ENCODE measurements at regions of chr3 and their contacts with region 1.

Region 1: DNA sequence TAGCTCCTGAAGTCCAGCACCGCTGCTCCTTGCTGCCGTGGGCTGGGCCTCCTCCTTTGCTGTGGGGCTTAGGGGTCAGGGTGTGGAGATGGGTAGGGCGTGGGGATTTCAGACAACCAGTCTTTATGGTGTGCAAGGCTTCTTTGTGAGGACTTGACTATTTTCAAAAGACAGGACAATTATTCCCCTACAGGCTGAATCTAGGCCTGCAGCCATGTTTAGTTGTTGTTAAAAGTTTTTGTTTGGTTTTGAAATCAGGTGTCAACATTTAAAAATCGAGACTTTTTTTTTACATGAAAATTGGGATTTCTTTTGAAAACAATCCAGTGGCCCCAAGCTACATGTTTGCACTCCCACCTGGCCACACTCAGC is 10.6 kb downstream of the RPL32 start:
- DNase-seq: peak in 1 of 4 experiments; percentile 41
- ATAC-seq: peak; percentile 11
- H3K4me3 ChIP-seq: no peak overlapping the region
- H3K27ac ChIP-seq: no peak overlapping the region; the same call in 2 of the 3 replicates
- H3K4me1 ChIP-seq: no peaks in the 10 kb centered on the region; a peak in 1 of 5 replicates
- H3K27me3 ChIP-seq: no peaks in the 10 kb centered on the region
- CTCF ChIP-seq: peak in 2 of 3 experiments; percentile 34 to 39; a peak in 2 of 6 replicates
- EP300 ChIP-seq: no peak
- POLR2A ChIP-seq: no peak
- RAD21 ChIP-seq: no peak

Region 2: GRCh38 chr3:12706504-12707253 is 124.1 kb before region 1 on chr3:
- CTCF ChIA-PET with region 1: interaction called, 3 read pairs
- POLR2A ChIA-PET with region 1: no interaction called
- in situ Hi-C with region 1: no loop called
- intact Hi-C with region 1: loop called (anchors 2 kb)
- DNase-seq: peak; percentile 73 to 87 (median 80)
- ATAC-seq: peak; percentile 99
- H3K4me3 ChIP-seq: no peak overlapping the region
- H3K27ac ChIP-seq: no peak overlapping the region
- H3K4me1 ChIP-seq: no peaks in the 10 kb centered on the region
- H3K27me3 ChIP-seq: peaks cover 14 to 33% of the 10 kb centered on the region in 2 experiments
- CTCF ChIP-seq: peak; percentile 95 to 99 (median 99)
- EP300 ChIP-seq: no peak
- POLR2A ChIP-seq: no peak
- RAD21 ChIP-seq: peak; percentile 73 to 95

Region 3: GRCh38 chr3:12810013-12810780 is 20.6 kb before region 1 on chr3:
- CTCF ChIA-PET with region 1: no interaction called
- POLR2A ChIA-PET with region 1: interaction called, 108 read pairs
- in situ Hi-C with region 1: no loop called
- intact Hi-C with region 1: no loop called
- DNase-seq: peak; percentile 98 to 100 (median 100)
- ATAC-seq: peak; percentile 99
- H3K4me3 ChIP-seq: peak overlapping the region; percentile 59
- H3K27ac ChIP-seq: peak overlapping the region; percentile 13; the same call in 2 of the 3 replicates
- H3K4me1 ChIP-seq: peaks cover 9 to 20% of the 10 kb centered on the region in 2 experiments; a peak in 4 of 5 replicates
- H3K27me3 ChIP-seq: no peaks in the 10 kb centered on the region
- CTCF ChIP-seq: peak; percentile 78 to 93 (median 93)
- EP300 ChIP-seq: no peak
- POLR2A ChIP-seq: peak; percentile 64; the same call in 1 of the 2 replicates
- RAD21 ChIP-seq: peak; percentile 61 to 70

Region 4: GRCh38 chr3:12817343-12817710 is 13.4 kb before region 1 on chr3:
- CTCF ChIA-PET with region 1: no interaction called
- POLR2A ChIA-PET with region 1: interaction called, 108 read pairs
- in situ Hi-C with region 1: no loop called
- intact Hi-C with region 1: no loop called
- DNase-seq: no peak
- ATAC-seq: no peak
- H3K4me3 ChIP-seq: no peak overlapping the region
- H3K27ac ChIP-seq: no peak overlapping the region
- H3K4me1 ChIP-seq: peaks cover 0 to 19% of the 10 kb centered on the region in 2 experiments; a peak in 1 of 5 replicates
- H3K27me3 ChIP-seq: no peaks in the 10 kb centered on the region
- CTCF ChIP-seq: no peak
- EP300 ChIP-seq: no peak
- POLR2A ChIP-seq: no peak
- RAD21 ChIP-seq: no peak

Measured in K562 (cell line).